ENCODE measurements at regions of chr5 and their contacts with region 1.

Region 1: GRCh38 chr5:88732181-88732633 is 150.8 kb downstream of the MEF2C start:
- DNase-seq: peak; percentile 53
- ATAC-seq: peak; percentile 26

Region 2: GRCh38 chr5:88845081-88845697 is 113.0 kb after region 1 on chr5:
- intact Hi-C with region 1: no loop called
- DNase-seq: no peak
- ATAC-seq: no peak

Region 3: GRCh38 chr5:90264689-90265544 is 1532.7 kb after region 1 on chr5:
- intact Hi-C with region 1: loop called (anchors 10 kb)
- DNase-seq: peak; percentile 55
- ATAC-seq: peak; percentile 68

Measured in Right ventricle myocardium superior (tissue), 1 donor.